ENCODE measurements at regions of chr17 and their contacts with region 1.

Region 1: DNA sequence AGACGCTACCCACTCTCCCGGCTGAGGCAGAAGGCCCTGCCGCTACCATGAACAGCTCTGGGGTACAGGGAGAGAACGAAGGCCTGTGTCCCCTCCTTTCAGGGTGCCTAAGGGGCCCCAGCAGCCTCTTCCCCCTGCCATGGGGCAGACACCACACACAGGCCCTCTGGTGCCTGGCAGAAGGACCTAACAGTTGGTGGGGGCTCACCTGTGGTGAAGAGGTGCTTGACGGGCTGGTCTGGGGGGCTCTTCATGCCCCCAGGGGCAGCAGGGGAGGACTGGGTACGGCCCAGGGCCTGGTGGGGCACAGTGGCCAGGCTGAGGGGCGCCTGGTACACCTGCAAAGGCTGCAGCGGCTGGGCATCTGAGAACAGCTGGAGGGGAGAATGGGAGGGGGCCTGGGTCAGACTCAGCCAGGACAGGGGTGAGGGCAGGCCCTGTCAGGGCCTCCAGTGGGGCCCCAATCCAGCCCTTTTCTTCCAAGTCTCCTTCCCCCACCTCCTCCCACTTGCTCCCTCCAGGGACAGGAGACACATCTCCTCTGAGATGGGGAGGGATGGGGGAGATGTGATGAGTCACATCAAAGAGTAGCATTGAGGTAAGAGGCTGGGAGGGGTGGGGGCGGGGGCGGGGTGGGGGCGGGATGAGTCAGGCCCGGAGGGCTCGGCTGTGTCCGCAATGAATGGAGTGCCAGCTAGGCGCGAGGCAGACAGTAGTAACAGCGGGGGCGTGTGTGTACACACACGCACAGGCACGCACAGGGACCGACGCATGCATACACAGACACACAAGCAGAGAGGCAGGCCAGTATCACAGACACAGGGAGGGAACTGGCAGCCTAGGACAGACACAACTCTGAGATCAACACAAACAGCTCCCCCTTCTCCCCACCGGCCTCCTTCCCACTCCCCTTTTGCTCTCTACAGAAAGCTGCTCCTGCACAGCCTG is 16.1 kb downstream of the G6PC3 start:
- DNase-seq: peak; percentile 87 to 96
- ATAC-seq: peak; percentile 65 to 76
- H3K4me3 ChIP-seq: peak overlapping the region; percentile 0; the same call in 1 of the 3 replicates
- H3K27ac ChIP-seq: peak overlapping the region; percentile 84 to 89
- H3K4me1 ChIP-seq: peaks cover 32% of the 10 kb centered on the region
- CTCF ChIP-seq: no peak
- EP300 ChIP-seq: peak in 1 of 2 experiments; percentile 42; a peak in 1 of 5 replicates
- POLR2A ChIP-seq: no peak
- RAD21 ChIP-seq: peak in 1 of 2 experiments; percentile 49; a peak in 3 of 5 replicates

Region 2: DNA sequence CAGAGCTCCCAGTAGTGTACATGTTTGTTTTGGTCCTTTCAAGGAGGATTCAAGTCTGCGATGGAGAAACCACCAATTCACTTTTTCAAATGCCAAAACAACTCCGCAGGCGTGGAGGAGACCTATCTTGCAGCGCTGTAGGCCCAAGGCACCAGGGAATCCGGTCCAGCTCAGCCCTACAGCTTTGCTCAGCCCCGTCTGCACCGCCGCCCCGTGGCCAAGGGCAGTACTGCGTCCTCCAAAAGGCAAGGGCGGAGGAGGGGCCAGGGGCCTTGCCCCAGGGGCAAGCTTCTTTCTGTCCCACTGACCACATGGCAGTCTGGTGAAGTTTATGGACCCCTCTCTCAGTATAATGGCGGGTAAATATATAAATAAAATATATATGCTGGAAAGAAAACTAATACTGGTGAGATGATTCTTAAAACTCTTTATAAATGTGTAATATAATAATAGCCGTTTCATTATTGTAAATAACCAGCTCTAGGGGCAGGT is 240.4 kb before region 1 on chr17:
- CTCF ChIA-PET with region 1: no interaction called
- POLR2A ChIA-PET with region 1: no interaction called
- DNase-seq: peak; percentile 87 to 97
- ATAC-seq: peak; percentile 77 to 89
- H3K4me3 ChIP-seq: no peak overlapping the region
- H3K27ac ChIP-seq: peak overlapping the region in 1 of 2 experiments; percentile 62; a peak in 4 of 6 replicates
- H3K4me1 ChIP-seq: peaks cover 19% of the 10 kb centered on the region
- CTCF ChIP-seq: peak; percentile 92
- EP300 ChIP-seq: no peak
- POLR2A ChIP-seq: no peak
- RAD21 ChIP-seq: peak; percentile 80 to 82

Region 3: GRCh38 chr17:44053125-44053872 is 33.3 kb before region 1 on chr17:
- CTCF ChIA-PET with region 1: interaction called, 23 read pairs
- POLR2A ChIA-PET with region 1: no interaction called
- DNase-seq: no peak
- ATAC-seq: peak; percentile 52 to 63; a peak in 4 of 6 replicates
- H3K4me3 ChIP-seq: no peak overlapping the region
- H3K27ac ChIP-seq: no peak overlapping the region
- H3K4me1 ChIP-seq: peaks cover 15% of the 10 kb centered on the region
- CTCF ChIP-seq: no peak
- EP300 ChIP-seq: no peak
- POLR2A ChIP-seq: no peak
- RAD21 ChIP-seq: no peak

Region 4: GRCh38 chr17:44070455-44071197 is 16.0 kb before region 1 on chr17 and contains the start of gene G6PC3:
- CTCF ChIA-PET with region 1: interaction called, 108 read pairs
- POLR2A ChIA-PET with region 1: interaction called, 25 read pairs
- DNase-seq: peak; percentile 99 to 100
- ATAC-seq: peak; percentile 80 to 92
- H3K4me3 ChIP-seq: peak within 1 kb of the TSS; percentile 69
- H3K27ac ChIP-seq: peak within 1 kb of the TSS; percentile 92 to 93
- H3K4me1 ChIP-seq: peaks cover 19% of the 10 kb centered on the region
- CTCF ChIP-seq: no peak
- EP300 ChIP-seq: no peak
- POLR2A ChIP-seq: peak; percentile 97
- RAD21 ChIP-seq: peak; percentile 4 to 43; a peak in 3 of 5 replicates
- polyA plus RNA-seq, gene G6PC3: 104 TPM in 2 replicates

Region 5: GRCh38 chr17:44132275-44132821 is 45.7 kb after region 1 on chr17:
- CTCF ChIA-PET with region 1: interaction called, 16 read pairs
- POLR2A ChIA-PET with region 1: no interaction called
- DNase-seq: no peak
- ATAC-seq: peak in 1 of 2 experiments; percentile 32; a peak in 2 of 6 replicates
- H3K4me3 ChIP-seq: no peak overlapping the region
- H3K27ac ChIP-seq: no peak overlapping the region
- H3K4me1 ChIP-seq: peaks cover 11% of the 10 kb centered on the region
- CTCF ChIP-seq: no peak
- EP300 ChIP-seq: no peak
- POLR2A ChIP-seq: no peak
- RAD21 ChIP-seq: no peak

Region 6: DNA sequence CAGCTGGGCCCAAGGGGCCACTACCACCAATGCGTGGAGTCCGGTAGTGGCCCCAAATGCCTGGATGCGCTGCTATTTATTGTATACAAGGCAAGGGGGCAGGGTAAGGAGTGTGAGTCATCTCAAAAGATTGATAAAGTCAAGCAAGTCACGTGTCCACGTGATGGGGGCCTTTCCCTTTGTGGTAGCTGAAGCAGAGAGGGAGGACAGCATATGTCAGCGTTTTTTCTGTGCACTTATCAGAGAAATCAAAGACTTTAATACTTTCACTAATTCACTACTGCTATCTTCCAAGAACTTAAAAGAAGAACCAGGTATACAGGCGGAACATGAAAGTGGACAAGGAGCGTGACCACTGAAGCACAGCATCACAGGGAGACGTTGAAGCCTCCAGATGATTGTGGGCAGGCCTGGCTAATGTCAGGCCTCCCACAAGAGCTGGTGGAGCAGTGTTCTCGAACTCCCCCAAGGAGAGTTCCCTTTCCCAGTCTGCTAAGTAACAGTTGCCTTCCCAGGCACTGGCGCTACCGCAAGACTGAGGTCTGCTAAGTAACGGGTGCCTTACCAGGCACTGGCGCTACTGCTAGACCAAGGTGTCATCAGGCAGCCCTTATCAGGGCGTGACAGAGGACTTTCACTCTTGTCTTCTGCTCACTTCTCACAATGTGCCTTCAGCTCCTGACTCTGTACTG is 73.0 kb after region 1 on chr17:
- CTCF ChIA-PET with region 1: interaction called, 12 read pairs
- POLR2A ChIA-PET with region 1: no interaction called
- DNase-seq: no peak
- ATAC-seq: no peak
- H3K4me3 ChIP-seq: no peak overlapping the region
- H3K27ac ChIP-seq: no peak overlapping the region
- H3K4me1 ChIP-seq: no peaks in the 10 kb centered on the region
- CTCF ChIP-seq: no peak
- EP300 ChIP-seq: no peak
- POLR2A ChIP-seq: no peak
- RAD21 ChIP-seq: no peak

Region 7: DNA sequence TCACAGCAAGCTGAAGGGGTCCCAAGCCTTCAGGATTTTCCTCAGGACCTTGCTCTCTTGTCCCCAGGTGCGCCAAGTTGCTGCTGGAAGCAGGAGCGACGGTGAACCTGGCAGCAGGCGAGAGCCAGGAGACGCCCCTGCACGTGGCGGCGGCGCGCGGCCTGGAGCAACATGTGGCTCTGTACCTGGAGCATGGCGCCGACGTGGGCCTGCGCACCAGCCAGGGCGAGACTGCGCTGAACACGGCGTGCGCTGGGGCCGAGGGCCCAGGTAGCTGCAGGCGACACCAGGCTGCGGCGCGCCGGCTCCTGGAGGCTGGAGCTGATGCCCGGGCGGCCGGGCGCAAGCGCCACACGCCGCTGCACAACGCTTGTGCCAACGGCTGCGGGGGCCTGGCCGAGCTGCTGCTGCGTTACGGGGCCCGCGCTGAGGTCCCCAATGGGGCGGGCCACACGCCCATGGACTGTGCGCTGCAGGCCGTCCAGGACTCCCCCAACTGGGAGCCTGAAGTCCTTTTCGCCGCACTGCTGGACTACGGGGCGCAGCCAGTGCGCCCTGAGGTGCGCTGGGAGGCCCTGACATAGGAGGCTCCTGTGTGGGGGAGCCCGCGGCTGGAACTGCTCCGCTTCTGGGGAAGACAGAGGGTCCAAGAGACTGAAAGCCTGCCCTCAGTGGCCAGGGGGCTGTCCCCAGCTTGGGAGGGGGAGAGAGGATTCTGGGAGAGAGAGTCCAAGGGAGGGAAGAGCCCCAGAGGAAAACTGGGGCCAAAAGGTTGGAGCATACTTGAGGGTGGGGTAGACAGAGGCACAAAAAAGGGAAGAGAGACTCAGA is 90.2 kb after region 1 on chr17:
- CTCF ChIA-PET with region 1: interaction called, 53 read pairs
- POLR2A ChIA-PET with region 1: no interaction called
- DNase-seq: no peak
- ATAC-seq: peak; percentile 16 to 19; a peak in 3 of 6 replicates
- H3K4me3 ChIP-seq: no peak overlapping the region
- H3K27ac ChIP-seq: no peak overlapping the region
- H3K4me1 ChIP-seq: no peaks in the 10 kb centered on the region
- CTCF ChIP-seq: no peak
- EP300 ChIP-seq: no peak
- POLR2A ChIP-seq: no peak
- RAD21 ChIP-seq: no peak

Region 8: GRCh38 chr17:45852535-45853297 is 1766.1 kb after region 1 on chr17:
- CTCF ChIA-PET with region 1: no interaction called
- POLR2A ChIA-PET with region 1: no interaction called
- DNase-seq: peak; percentile 57 to 70
- ATAC-seq: peak; percentile 25 to 73; a peak in 4 of 6 replicates
- H3K4me3 ChIP-seq: peak overlapping the region; percentile 14; the same call in 1 of the 3 replicates
- H3K27ac ChIP-seq: peak overlapping the region in 1 of 2 experiments; percentile 61; a peak in 1 of 6 replicates
- H3K4me1 ChIP-seq: 0 out of 3 replicates have a peak, but pooled peaks cover 2% of the 10 kb centered on the region
- CTCF ChIP-seq: peak; percentile 97
- EP300 ChIP-seq: no peak
- POLR2A ChIP-seq: no peak
- RAD21 ChIP-seq: peak; percentile 94 to 95

Measured in A549 (cell line).